ENCODE measurements at regions of chr3 and their contacts with region 1.

Region 1: DNA sequence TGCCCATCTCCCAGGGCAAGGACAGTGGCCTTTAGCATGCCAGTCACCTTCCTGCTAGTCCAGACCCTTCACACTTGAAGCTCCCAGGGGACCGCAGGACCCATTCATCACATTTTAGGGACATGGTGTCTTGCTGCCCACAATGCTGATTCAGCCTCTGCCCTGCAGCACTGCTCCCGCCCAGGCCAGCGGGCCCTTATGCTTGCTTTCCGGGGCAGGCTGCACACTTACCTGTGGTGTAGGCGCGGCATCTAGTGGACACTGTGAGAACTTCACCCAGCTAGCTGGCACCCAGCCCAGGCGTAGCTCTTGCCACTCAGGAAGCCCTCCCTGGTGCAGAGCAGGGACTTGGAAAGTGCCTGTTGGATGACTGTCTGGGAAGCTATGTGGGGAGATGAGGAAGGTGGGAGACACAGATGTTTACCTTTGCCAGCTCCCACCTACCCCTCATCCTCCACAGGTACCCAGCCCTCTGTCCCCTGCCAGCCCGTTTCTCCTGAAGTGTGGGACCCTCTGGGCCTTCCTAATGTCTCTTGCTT is 26.2 kb upstream of the NR2C2 start:
- DNase-seq: peak; percentile 79
- H3K4me3 Mint-ChIP-seq: no peak overlapping the region
- H3K27ac Mint-ChIP-seq: no peak overlapping the region
- H3K4me1 Mint-ChIP-seq: no peaks in the 10 kb centered on the region
- H3K27me3 Mint-ChIP-seq: peaks cover 26% of the 10 kb centered on the region
- CTCF ChIP-seq: peak; percentile 99

Region 2: GRCh38 chr3:14261229-14261628 is 659.9 kb before region 1 on chr3:
- CTCF ChIA-PET with region 1: interaction called, 3 read pairs
- POLR2A ChIA-PET with region 1: no interaction called
- intact Hi-C with region 1: loop called (anchors 1 kb)
- DNase-seq: peak; percentile 80
- H3K4me3 Mint-ChIP-seq: no peak overlapping the region
- H3K27ac Mint-ChIP-seq: no peak overlapping the region
- H3K4me1 Mint-ChIP-seq: no peaks in the 10 kb centered on the region
- H3K27me3 Mint-ChIP-seq: peaks cover 29% of the 10 kb centered on the region
- CTCF ChIP-seq: peak; percentile 97

Region 3: DNA sequence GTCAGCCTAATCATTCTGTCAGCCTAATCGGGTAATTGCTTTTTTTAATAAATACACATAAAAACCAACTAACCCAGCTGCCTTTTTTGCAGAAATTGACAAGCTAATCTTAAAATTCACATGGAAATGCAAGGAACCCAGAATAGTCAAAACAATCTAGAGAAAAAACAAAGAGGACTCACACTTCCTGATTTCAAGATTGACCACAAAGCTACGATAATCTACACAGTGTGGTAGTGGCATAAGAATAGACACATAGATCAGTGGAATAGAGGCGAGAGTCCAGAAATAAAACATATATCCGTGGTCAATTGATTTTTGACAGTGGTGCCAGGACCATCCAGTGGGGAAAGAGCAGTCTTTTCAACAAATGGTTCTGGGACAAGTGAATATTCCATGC is 248.6 kb before region 1 on chr3:
- CTCF ChIA-PET with region 1: interaction called, 94 read pairs
- POLR2A ChIA-PET with region 1: interaction called, 5 read pairs
- intact Hi-C with region 1: loop called (anchors 1 kb)
- DNase-seq: no peak
- H3K4me3 Mint-ChIP-seq: no peak overlapping the region
- H3K27ac Mint-ChIP-seq: no peak overlapping the region
- H3K4me1 Mint-ChIP-seq: no peaks in the 10 kb centered on the region
- H3K27me3 Mint-ChIP-seq: no peaks in the 10 kb centered on the region
- CTCF ChIP-seq: no peak

Region 4: GRCh38 chr3:14938954-14939353 is 17.8 kb after region 1 on chr3:
- CTCF ChIA-PET with region 1: interaction called, 13 read pairs
- POLR2A ChIA-PET with region 1: no interaction called
- intact Hi-C with region 1: no loop called
- DNase-seq: no peak
- H3K4me3 Mint-ChIP-seq: no peak overlapping the region
- H3K27ac Mint-ChIP-seq: no peak overlapping the region
- H3K4me1 Mint-ChIP-seq: no peaks in the 10 kb centered on the region
- H3K27me3 Mint-ChIP-seq: no peaks in the 10 kb centered on the region
- CTCF ChIP-seq: no peak

Region 5: GRCh38 chr3:15056676-15057404 is 135.7 kb after region 1 on chr3:
- CTCF ChIA-PET with region 1: interaction called, 12 read pairs
- POLR2A ChIA-PET with region 1: no interaction called
- intact Hi-C with region 1: no loop called
- DNase-seq: no peak
- H3K4me3 Mint-ChIP-seq: no peak overlapping the region
- H3K27ac Mint-ChIP-seq: no peak overlapping the region
- H3K4me1 Mint-ChIP-seq: peaks cover 6% of the 10 kb centered on the region
- H3K27me3 Mint-ChIP-seq: no peaks in the 10 kb centered on the region
- CTCF ChIP-seq: no peak

Region 6: DNA sequence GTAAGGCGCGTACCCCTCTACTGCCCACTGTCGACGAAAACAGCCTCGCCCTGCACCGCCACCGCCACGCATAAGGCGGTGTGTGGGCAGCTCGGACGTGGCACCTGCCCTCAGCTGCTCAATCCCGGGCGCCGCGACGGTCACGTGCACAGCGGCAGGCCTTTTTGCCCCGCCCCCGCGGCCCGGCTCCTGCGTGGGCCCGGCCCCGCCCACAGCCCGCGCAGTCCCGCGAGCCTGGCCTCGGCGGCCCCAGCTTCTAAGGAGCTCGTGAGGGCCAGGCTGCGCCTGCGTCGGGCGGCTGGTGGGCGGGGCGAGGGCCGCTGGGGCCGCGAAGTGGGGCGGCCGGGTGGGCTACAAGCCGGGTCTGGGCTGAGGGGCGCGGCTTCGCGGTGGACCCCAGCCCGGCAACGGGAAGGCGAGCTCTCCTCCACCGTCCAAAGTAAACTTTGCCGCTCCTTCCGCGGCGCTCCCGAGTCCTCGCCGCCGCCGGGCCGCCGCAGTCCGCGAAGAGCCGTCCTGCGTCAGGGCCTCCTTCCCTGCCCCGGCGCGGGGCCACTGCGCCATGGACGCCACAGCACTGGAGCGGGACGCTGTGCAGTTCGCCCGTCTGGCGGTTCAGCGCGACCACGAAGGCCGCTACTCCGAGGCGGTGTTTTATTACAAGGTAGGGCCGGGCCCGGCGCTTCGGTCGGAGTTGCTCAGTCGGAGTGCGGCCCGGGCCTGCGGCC is 285.0 kb after region 1 on chr3 and contains the start of gene CAPN7:
- CTCF ChIA-PET with region 1: interaction called, 3 read pairs
- POLR2A ChIA-PET with region 1: no interaction called
- intact Hi-C with region 1: loop called (anchors 5 kb)
- DNase-seq: peak; percentile 93
- H3K4me3 Mint-ChIP-seq: peak within 1 kb of the TSS; percentile 81
- H3K27ac Mint-ChIP-seq: peak within 1 kb of the TSS; percentile 91
- H3K4me1 Mint-ChIP-seq: peaks cover 13% of the 10 kb centered on the region
- H3K27me3 Mint-ChIP-seq: no peaks in the 10 kb centered on the region
- CTCF ChIP-seq: no peak
- total RNA-seq, gene CAPN7: 48.4 and 55.2 TPM in 2 replicates